Mammary epithelial cell (primary cell): ENCODE measurements at regions of chr2 and their contacts with region 1.

Region 1: DNA sequence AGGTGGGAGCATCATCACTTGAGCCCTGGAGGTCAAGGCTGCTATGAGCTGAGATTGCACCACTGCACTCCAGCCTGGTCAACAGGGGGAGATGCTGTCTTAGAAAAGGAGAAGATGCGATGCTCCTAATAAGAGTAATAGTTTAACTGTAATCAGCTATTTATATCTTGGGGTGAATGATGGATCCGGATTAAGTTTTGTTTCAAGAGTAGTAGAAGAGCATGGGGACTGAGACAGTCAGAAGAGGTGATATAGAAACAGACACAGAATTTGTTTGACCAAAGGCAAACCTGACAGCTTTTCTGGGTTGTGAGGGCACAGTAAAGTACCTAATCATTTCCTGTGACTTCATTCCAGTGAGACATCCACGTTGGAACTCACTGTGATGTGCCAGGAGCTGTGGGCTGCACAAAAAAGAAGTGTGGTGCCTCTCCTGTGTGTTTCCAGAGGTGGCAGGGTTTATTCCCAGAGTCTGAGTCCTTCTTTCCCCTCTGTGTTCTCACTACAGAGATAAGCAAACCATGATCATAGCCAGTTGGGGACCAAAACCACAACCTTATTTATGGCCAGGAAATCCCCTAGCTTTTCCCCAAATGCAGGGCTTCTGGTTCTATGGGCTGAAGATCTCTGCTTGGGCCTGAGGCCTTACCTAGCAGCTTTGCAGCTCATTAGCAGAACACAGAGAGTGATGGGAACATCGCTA is 113.7 kb downstream of the XRCC5 start:
- DNase-seq: peak; percentile 41
- H3K4me3 ChIP-seq: no peak overlapping the region
- H3K27ac ChIP-seq: no peak overlapping the region
- H3K4me1 ChIP-seq: peaks cover 28% of the 10 kb centered on the region
- H3K27me3 ChIP-seq: no peaks in the 10 kb centered on the region
- CTCF ChIP-seq: peak; percentile 19 to 48

Region 2: GRCh38 chr2:215843579-215843978 is 379.2 kb before region 1 on chr2:
- CTCF ChIA-PET with region 1: no interaction called
- dilution Hi-C with region 1: no loop called
- in situ Hi-C with region 1: no loop called
- intact Hi-C with region 1: no loop called
- DNase-seq: peak; percentile 96
- H3K4me3 ChIP-seq: no peak overlapping the region
- H3K27ac ChIP-seq: peak overlapping the region; percentile 35
- H3K4me1 ChIP-seq: peaks cover 21% of the 10 kb centered on the region
- H3K27me3 ChIP-seq: no peaks in the 10 kb centered on the region
- CTCF ChIP-seq: no peak

Region 3: GRCh38 chr2:216283038-216283900 is 60.5 kb after region 1 on chr2:
- CTCF ChIA-PET with region 1: no interaction called
- dilution Hi-C with region 1: loop called (anchors 5 kb)
- in situ Hi-C with region 1: no loop called
- intact Hi-C with region 1: no loop called
- DNase-seq: no peak
- H3K4me3 ChIP-seq: no peak overlapping the region
- H3K27ac ChIP-seq: no peak overlapping the region
- H3K4me1 ChIP-seq: no peaks in the 10 kb centered on the region
- H3K27me3 ChIP-seq: no peaks in the 10 kb centered on the region
- CTCF ChIP-seq: peak; percentile 27 to 33